ENCODE measurements at regions of chr1 and their contacts with region 1.

Region 1: DNA sequence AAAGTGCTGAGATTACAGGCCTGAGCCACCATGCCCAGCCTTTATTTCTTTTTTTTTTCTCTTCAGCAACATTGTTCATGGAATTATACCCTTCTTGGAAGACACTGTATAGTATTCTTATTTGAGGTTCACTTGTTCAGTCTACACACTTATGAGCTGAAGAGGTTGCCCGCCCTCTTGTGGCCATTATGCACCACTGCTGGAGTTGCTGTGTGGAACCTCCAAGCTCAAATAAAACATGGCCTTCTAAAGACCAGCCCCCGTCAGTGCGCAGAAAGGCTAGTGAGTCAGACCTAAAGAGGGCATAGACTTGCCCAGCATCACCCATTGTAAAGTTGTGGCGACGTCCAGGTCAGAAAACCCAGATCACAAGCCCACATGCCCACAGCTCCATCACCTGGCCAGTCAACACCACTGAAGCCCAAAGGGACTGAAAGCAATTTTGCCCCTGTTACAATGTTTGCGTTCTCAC is 20.4 kb downstream of the LURAP1 start:
- DNase-seq: peak; percentile 91
- H3K4me3 Mint-ChIP-seq: no peak overlapping the region
- H3K27ac Mint-ChIP-seq: peak overlapping the region; percentile 28
- H3K4me1 Mint-ChIP-seq: peaks cover 13% of the 10 kb centered on the region
- H3K27me3 Mint-ChIP-seq: no peaks in the 10 kb centered on the region
- CTCF ChIP-seq: peak; percentile 93

Region 2: DNA sequence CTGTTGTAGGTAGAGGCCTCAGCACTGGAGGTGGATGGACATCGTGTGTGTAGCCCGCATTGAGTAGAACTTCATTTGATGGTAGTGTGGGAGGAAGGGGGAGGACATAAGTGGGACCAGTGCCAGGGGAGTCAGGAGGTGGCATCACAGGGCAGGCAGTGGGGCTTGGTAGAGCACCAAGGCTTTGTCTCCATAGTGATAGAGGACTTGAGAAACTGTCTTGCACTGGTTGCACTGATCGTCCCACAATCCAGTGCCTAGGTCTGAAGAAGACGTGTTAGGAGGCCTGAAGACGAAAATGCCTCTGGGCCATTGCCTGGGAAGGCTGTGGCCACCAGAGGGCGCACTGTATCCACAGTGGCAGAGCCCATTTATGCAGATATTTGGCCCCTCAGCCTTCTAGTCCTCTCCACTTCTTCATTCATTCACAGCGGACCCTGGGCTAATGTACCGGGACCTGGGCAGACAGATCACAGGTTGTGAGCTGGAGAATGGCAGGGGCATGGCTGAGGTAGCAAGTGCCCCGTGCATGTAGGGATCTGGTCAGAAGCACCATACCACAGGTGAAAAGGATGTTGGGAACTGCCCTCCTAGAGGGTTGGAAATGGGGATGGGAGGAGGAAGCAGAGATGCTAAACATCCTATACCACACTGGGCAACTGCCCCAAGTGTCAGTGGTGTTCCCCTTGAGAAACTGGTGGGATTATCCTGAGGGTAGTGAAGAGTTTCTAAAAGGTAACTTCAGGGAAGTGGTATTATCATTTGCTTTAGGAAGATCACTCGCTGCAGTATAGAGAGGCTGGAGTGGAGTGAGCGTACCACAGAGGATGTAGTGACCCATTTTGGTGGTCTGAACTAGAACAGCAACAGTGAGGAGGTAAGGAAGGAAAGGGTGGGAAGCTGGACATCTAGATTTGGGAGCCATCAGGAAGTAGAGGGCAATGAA is 186.3 kb before region 1 on chr1:
- CTCF ChIA-PET with region 1: interaction called, 48 read pairs
- POLR2A ChIA-PET with region 1: no interaction called
- intact Hi-C with region 1: loop called (anchors 1 kb)
- DNase-seq: peak; percentile 83
- H3K4me3 Mint-ChIP-seq: no peak overlapping the region
- H3K27ac Mint-ChIP-seq: no peak overlapping the region
- H3K4me1 Mint-ChIP-seq: no peaks in the 10 kb centered on the region
- H3K27me3 Mint-ChIP-seq: no peaks in the 10 kb centered on the region
- CTCF ChIP-seq: peak; percentile 97

Region 3: GRCh38 chr1:46132529-46133180 is 90.9 kb before region 1 on chr1 and contains the start of gene PIK3R3:
- CTCF ChIA-PET with region 1: interaction called, 7 read pairs
- POLR2A ChIA-PET with region 1: interaction called, 11 read pairs
- intact Hi-C with region 1: loop called (anchors 5 kb)
- DNase-seq: peak; percentile 98
- H3K4me3 Mint-ChIP-seq: peak within 1 kb of the TSS; percentile 75
- H3K27ac Mint-ChIP-seq: peak within 1 kb of the TSS; percentile 100
- H3K4me1 Mint-ChIP-seq: peaks cover 43% of the 10 kb centered on the region
- H3K27me3 Mint-ChIP-seq: no peaks in the 10 kb centered on the region
- CTCF ChIP-seq: no peak
- total RNA-seq, gene PIK3R3: 8.0 and 9.3 TPM in 2 replicates

Region 4: GRCh38 chr1:46188295-46189030 is 35.0 kb before region 1 on chr1:
- CTCF ChIA-PET with region 1: interaction called, 266 read pairs
- POLR2A ChIA-PET with region 1: interaction called, 66 read pairs
- intact Hi-C with region 1: no loop called
- DNase-seq: no peak
- H3K4me3 Mint-ChIP-seq: no peak overlapping the region
- H3K27ac Mint-ChIP-seq: peak overlapping the region; percentile 84
- H3K4me1 Mint-ChIP-seq: peaks cover 38% of the 10 kb centered on the region
- H3K27me3 Mint-ChIP-seq: no peaks in the 10 kb centered on the region
- CTCF ChIP-seq: no peak

Region 5: GRCh38 chr1:46203738-46204405 is 19.6 kb before region 1 on chr1:
- CTCF ChIA-PET with region 1: interaction called, 31 read pairs
- POLR2A ChIA-PET with region 1: interaction called, 29 read pairs
- intact Hi-C with region 1: loop called (anchors 2 kb)
- DNase-seq: peak; percentile 9
- H3K4me3 Mint-ChIP-seq: peak overlapping the region; percentile 75
- H3K27ac Mint-ChIP-seq: peak overlapping the region; percentile 73
- H3K4me1 Mint-ChIP-seq: peaks cover 28% of the 10 kb centered on the region
- H3K27me3 Mint-ChIP-seq: no peaks in the 10 kb centered on the region
- CTCF ChIP-seq: no peak

Region 6: GRCh38 chr1:46247436-46248121 is 24.1 kb after region 1 on chr1 and contains the start of gene RAD54L:
- CTCF ChIA-PET with region 1: interaction called, 31 read pairs
- POLR2A ChIA-PET with region 1: interaction called, 13 read pairs
- intact Hi-C with region 1: no loop called
- DNase-seq: peak; percentile 99
- H3K4me3 Mint-ChIP-seq: peak within 1 kb of the TSS; percentile 81
- H3K27ac Mint-ChIP-seq: peak within 1 kb of the TSS; percentile 91
- H3K4me1 Mint-ChIP-seq: peaks cover 33% of the 10 kb centered on the region
- H3K27me3 Mint-ChIP-seq: no peaks in the 10 kb centered on the region
- CTCF ChIP-seq: no peak
- total RNA-seq, gene RAD54L: 4.5 and 5.0 TPM in 2 replicates